Testis (tissue), 5 donors: ENCODE measurements at regions of chr1 and their contacts with region 1.

Region 1: GRCh38 chr1:208245185-208245705 is 1.1 kb upstream of the PLXNA2 start:
- DNase-seq: peak; percentile 98
- H3K4me3 ChIP-seq: peak overlapping the region in 1 of 2 donors; percentile 69
- H3K27ac ChIP-seq: peak overlapping the region in 1 of 2 donors; percentile 83
- H3K4me1 ChIP-seq: peaks cover 12% of the 10 kb centered on the region
- H3K27me3 ChIP-seq: no peaks in the 10 kb centered on the region
- CTCF ChIP-seq: peak; percentile 80 to 92 (median 86)
- POLR2A ChIP-seq: no peak

Region 2: GRCh38 chr1:208029381-208030287 is 215.6 kb before region 1 on chr1:
- intact Hi-C with region 1: loop called (anchors 10 kb)
- DNase-seq: no peak
- H3K4me3 ChIP-seq: no peak overlapping the region
- H3K27ac ChIP-seq: peak overlapping the region; percentile 5 to 39
- H3K4me1 ChIP-seq: peaks cover 21% of the 10 kb centered on the region
- H3K27me3 ChIP-seq: no peaks in the 10 kb centered on the region
- CTCF ChIP-seq: no peak
- POLR2A ChIP-seq: no peak

Region 3: DNA sequence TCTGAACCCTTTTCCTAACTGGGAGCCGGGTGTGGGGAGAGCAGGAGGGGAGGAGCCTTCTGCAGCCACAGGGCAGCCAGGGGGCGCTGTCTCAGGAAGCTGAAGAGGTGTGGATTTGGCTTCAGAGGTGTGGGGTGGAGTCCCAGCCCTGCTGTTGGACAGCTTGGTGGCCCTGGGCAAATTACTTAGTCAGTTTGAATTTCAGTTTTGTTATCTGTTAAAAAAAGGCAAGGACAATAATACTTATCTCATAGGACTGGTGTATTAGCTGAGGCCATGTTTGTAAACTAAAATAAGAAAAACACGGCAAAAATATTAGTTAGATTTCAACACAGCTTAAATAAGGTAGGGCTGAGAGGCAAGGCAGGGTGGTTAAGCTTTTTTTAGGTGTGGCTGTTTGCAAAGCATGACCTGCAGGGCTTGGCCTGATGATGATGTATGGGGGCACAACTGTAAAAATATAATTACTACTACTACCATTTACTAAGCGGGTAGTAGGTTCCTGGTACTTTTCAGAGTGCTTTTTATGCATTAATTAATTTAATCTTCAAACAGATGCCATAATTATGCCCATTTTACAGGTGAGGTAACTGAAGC is 112.9 kb before region 1 on chr1:
- intact Hi-C with region 1: loop called (anchors 10 kb)
- DNase-seq: peak; percentile 87
- H3K4me3 ChIP-seq: no peak overlapping the region
- H3K27ac ChIP-seq: no peak overlapping the region
- H3K4me1 ChIP-seq: no peaks in the 10 kb centered on the region
- H3K27me3 ChIP-seq: no peaks in the 10 kb centered on the region
- CTCF ChIP-seq: peak; percentile 71 to 83 (median 76)
- POLR2A ChIP-seq: no peak